Activated CD4-positive, alpha-beta T cell treated with anti-CD3 and anti-CD28 coated beads for 36 hours (primary cell): ENCODE measurements at regions of chr9 and their contacts with region 1.

Region 1: DNA sequence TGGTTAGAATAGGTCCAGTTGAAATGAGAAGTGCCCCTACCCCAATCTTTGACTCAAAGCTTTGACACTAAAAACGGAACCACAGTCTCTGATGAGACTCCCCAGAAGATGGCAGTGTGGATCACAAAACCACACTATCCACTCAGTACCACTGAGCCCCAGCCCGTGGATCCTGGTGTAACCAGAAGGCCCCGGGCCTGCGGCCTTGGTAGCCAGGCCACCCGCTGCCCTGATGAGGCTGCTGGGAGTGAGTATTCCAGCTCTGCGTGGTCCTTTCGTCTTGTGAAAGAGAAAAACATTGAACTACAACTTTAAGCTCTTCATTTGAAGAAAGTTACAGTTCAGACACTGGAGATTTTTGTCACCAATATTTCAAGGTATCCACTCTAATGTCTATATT is 42.2 kb upstream of the FBP1 start:
- DNase-seq: peak; percentile 71
- ATAC-seq: peak; percentile 92
- H3K4me3 Mint-ChIP-seq: no peak overlapping the region
- H3K27ac Mint-ChIP-seq: no peak overlapping the region
- H3K4me1 Mint-ChIP-seq: no peaks in the 10 kb centered on the region
- H3K27me3 Mint-ChIP-seq: peaks cover 21% of the 10 kb centered on the region

Region 2: DNA sequence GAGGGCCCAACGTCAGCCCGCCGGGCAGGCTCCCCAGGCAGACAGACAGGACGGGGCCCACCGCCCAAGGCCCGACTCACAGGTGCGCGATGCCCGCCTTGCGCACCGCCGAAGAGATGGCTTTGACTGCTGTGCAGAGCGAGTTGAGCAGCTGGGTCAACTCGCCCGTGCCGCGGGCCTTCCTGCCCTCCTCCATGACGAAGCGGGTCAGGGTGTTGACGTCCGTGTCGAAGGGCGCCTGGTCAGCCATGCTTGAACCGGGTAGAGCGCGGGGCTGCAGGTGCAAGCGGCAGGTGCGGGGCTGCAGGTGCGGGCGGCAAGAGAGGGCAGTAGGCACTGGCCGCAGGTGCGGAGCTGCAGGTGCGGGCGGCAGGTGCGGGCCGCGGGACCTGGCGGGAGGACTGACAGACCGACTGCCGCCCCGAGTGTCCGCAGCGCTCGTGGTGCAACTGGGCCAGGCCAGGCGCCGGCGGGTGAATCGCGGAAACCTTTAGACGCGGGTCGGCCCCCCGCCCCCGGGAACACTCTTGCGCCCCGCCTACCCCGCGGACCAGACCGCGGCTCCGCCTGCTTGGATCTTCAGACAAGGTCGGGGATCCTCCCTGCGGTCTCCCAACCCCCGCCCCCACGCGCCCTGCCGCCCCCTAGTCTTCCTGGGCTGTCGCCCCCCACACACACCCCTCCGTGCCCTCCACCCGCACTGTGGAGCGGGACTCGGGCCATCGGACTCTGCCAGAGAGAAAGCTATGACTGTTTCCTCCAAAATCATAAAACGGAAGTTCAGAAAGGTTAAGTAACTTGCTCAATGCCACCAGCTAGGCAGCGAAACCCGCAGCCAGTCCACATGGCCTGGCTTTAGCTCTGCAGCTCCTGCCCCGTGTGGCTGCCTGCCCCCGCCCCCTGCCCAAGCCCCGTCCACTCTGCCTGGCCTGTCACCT is 42.2 kb before region 1 on chr9 and contains the start of gene FBP1:
- CTCF ChIA-PET with region 1: no interaction called
- POLR2A ChIA-PET with region 1: no interaction called
- intact Hi-C with region 1: no loop called
- DNase-seq: peak; percentile 52
- ATAC-seq: peak; percentile 88
- H3K4me3 Mint-ChIP-seq: peak within 1 kb of the TSS; percentile 72
- H3K27ac Mint-ChIP-seq: peak within 1 kb of the TSS; percentile 63
- H3K4me1 Mint-ChIP-seq: peaks cover 15% of the 10 kb centered on the region
- H3K27me3 Mint-ChIP-seq: peaks cover 9% of the 10 kb centered on the region
- total RNA-seq, gene FBP1: 0.39 to 0.47 TPM

Region 3: GRCh38 chr9:94668418-94668932 is 13.0 kb before region 1 on chr9:
- CTCF ChIA-PET with region 1: interaction called, 30 read pairs
- POLR2A ChIA-PET with region 1: no interaction called
- intact Hi-C with region 1: no loop called
- DNase-seq: no peak
- ATAC-seq: no peak
- H3K4me3 Mint-ChIP-seq: peak overlapping the region; percentile 71
- H3K27ac Mint-ChIP-seq: no peak overlapping the region
- H3K4me1 Mint-ChIP-seq: peaks cover 11% of the 10 kb centered on the region
- H3K27me3 Mint-ChIP-seq: peaks cover 4% of the 10 kb centered on the region

Region 4: GRCh38 chr9:94697972-94698581 is 16.6 kb after region 1 on chr9:
- CTCF ChIA-PET with region 1: interaction called, 13 read pairs
- POLR2A ChIA-PET with region 1: no interaction called
- intact Hi-C with region 1: no loop called
- DNase-seq: no peak
- ATAC-seq: no peak
- H3K4me3 Mint-ChIP-seq: no peak overlapping the region
- H3K27ac Mint-ChIP-seq: no peak overlapping the region
- H3K4me1 Mint-ChIP-seq: no peaks in the 10 kb centered on the region
- H3K27me3 Mint-ChIP-seq: peaks cover 6% of the 10 kb centered on the region

Region 5: DNA sequence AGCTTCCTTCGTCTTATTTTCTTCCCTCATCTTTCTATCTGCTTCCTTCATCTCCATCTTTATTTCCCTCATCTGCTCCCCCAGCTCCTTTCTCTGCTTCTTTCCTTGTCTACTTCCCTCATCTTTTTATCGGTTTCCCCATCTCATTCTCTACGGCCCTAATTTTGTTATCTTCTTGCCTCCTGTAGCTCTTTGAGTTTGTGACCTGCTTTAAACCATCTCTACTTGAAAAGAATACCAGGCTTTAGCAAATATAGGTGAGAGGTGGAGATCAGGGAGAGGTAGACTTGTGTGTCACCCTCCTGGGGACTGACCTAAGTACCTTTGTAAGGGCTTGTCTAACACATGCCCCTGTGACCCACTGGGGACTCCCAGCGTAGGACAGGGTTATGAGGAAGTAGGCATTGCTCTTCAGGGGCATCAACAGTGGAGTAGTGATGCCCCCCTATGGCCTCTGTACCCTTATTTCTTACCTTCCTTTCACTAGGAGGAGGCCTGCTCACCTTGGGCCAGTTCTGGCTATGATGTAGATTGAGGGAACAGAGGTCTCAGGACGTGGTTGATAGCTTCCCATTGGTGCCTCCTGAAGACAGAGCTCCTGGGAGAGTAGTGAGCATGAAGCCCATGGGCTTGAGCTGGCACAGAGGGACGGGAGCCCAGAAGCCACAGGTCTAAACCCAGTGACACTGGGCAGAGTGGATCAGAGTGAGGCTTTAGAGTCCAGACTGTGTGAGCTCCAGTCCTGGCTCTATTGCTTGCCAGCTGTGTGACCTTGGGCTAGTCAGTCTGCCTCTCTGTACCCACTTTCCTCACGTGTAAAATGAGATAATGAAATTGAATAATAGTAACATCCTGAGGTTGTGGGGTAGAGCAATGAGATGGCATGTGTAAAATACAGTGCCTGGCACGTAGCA is 236.6 kb after region 1 on chr9:
- CTCF ChIA-PET with region 1: no interaction called
- POLR2A ChIA-PET with region 1: no interaction called
- intact Hi-C with region 1: loop called in 1 of 2 experiments (anchors 10 kb)
- DNase-seq: no peak
- ATAC-seq: no peak
- H3K4me3 Mint-ChIP-seq: no peak overlapping the region
- H3K27ac Mint-ChIP-seq: no peak overlapping the region
- H3K4me1 Mint-ChIP-seq: no peaks in the 10 kb centered on the region
- H3K27me3 Mint-ChIP-seq: no peaks in the 10 kb centered on the region

Region 6: GRCh38 chr9:95167998-95168397 is 486.5 kb after region 1 on chr9:
- CTCF ChIA-PET with region 1: interaction called, 11 read pairs
- POLR2A ChIA-PET with region 1: no interaction called
- intact Hi-C with region 1: no loop called
- DNase-seq: peak; percentile 82
- ATAC-seq: peak; percentile 87
- H3K4me3 Mint-ChIP-seq: no peak overlapping the region
- H3K27ac Mint-ChIP-seq: no peak overlapping the region
- H3K4me1 Mint-ChIP-seq: peaks cover 16% of the 10 kb centered on the region
- H3K27me3 Mint-ChIP-seq: no peaks in the 10 kb centered on the region